ENCODE measurements at regions of chr1 and their contacts with region 1.

Region 1: GRCh38 chr1:220776720-220777326 is 9.9 kb upstream of the MTARC1 start:
- DNase-seq: peak; percentile 84
- H3K4me3 ChIP-seq: peak overlapping the region in 1 of 2 experiments; percentile 41; a peak in 1 of 4 replicates
- H3K27ac ChIP-seq: no peak overlapping the region
- H3K4me1 ChIP-seq: no peaks in the 10 kb centered on the region
- H3K27me3 ChIP-seq: no peaks in the 10 kb centered on the region
- CTCF ChIP-seq: peak; percentile 97
- EP300 ChIP-seq: no peak
- RAD21 ChIP-seq: peak; percentile 96

Region 2: DNA sequence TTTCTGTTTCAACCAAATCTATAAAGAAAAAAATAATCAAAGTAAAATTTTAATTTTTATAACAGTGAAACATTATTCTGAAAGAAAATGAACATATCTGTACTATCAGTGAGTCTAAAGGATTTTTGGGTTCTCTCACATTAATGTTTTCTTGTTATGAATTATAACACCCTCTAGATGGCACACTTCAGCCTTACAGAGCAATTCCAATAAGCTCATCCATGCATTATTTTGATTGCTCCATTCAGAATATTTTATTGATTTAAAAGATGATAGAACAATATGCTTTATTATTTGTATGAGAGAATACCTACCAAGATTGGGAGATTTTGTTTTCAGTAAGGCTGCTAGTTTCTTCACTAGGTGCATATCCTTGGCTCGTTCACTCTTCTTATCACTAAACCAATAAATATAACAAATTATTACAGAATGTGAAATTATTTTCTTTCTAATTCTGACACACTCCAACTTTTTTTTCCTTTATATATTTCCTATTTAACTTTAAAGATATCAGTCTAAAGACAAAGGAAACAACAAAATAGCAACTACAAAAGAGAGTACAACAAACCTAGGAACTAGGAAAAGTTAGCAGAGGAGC is 587.0 kb before region 1 on chr1:
- CTCF ChIA-PET with region 1: interaction called, 19 read pairs
- POLR2A ChIA-PET with region 1: no interaction called
- DNase-seq: peak; percentile 32
- H3K4me3 ChIP-seq: no peak overlapping the region
- H3K27ac ChIP-seq: 0 out of 4 replicates have a peak overlapping the region, but pooled peaks of 1 of the 2 experiments have one; percentile 19
- H3K4me1 ChIP-seq: peaks cover 0 to 2% of the 10 kb centered on the region in 2 experiments; a peak in 1 of 4 replicates
- H3K27me3 ChIP-seq: no peaks in the 10 kb centered on the region
- CTCF ChIP-seq: peak; percentile 72
- EP300 ChIP-seq: no peak
- RAD21 ChIP-seq: peak; percentile 68

Region 3: GRCh38 chr1:220281159-220281574 is 495.7 kb before region 1 on chr1:
- CTCF ChIA-PET with region 1: interaction called, 50 read pairs
- POLR2A ChIA-PET with region 1: no interaction called
- DNase-seq: peak; percentile 18
- H3K4me3 ChIP-seq: no peak overlapping the region
- H3K27ac ChIP-seq: no peak overlapping the region
- H3K4me1 ChIP-seq: peaks cover 0 to 6% of the 10 kb centered on the region in 2 experiments; a peak in 2 of 4 replicates
- H3K27me3 ChIP-seq: no peaks in the 10 kb centered on the region
- CTCF ChIP-seq: peak; percentile 83
- EP300 ChIP-seq: no peak
- RAD21 ChIP-seq: peak; percentile 80

Region 4: GRCh38 chr1:220680085-220680687 is 96.6 kb before region 1 on chr1:
- CTCF ChIA-PET with region 1: interaction called, 22 read pairs
- POLR2A ChIA-PET with region 1: no interaction called
- DNase-seq: peak; percentile 71
- H3K4me3 ChIP-seq: no peak overlapping the region
- H3K27ac ChIP-seq: no peak overlapping the region
- H3K4me1 ChIP-seq: no peaks in the 10 kb centered on the region
- H3K27me3 ChIP-seq: no peaks in the 10 kb centered on the region
- CTCF ChIP-seq: peak; percentile 78
- EP300 ChIP-seq: no peak
- RAD21 ChIP-seq: peak; percentile 73

Region 5: GRCh38 chr1:220726634-220727033 is 50.2 kb before region 1 on chr1:
- CTCF ChIA-PET with region 1: interaction called, 11 read pairs
- POLR2A ChIA-PET with region 1: no interaction called
- DNase-seq: no peak
- H3K4me3 ChIP-seq: no peak overlapping the region
- H3K27ac ChIP-seq: no peak overlapping the region
- H3K4me1 ChIP-seq: no peaks in the 10 kb centered on the region
- H3K27me3 ChIP-seq: no peaks in the 10 kb centered on the region
- CTCF ChIP-seq: peak; percentile 31; the same call in 1 of the 2 replicates
- EP300 ChIP-seq: no peak
- RAD21 ChIP-seq: no peak

Region 6: GRCh38 chr1:220755309-220755708 is 21.5 kb before region 1 on chr1:
- CTCF ChIA-PET with region 1: interaction called, 54 read pairs
- POLR2A ChIA-PET with region 1: no interaction called
- DNase-seq: no peak
- H3K4me3 ChIP-seq: no peak overlapping the region
- H3K27ac ChIP-seq: no peak overlapping the region
- H3K4me1 ChIP-seq: peaks cover 0 to 3% of the 10 kb centered on the region in 2 experiments; a peak in 1 of 4 replicates
- H3K27me3 ChIP-seq: no peaks in the 10 kb centered on the region
- CTCF ChIP-seq: no peak
- EP300 ChIP-seq: no peak
- RAD21 ChIP-seq: no peak

Region 7: GRCh38 chr1:220825819-220826551 is 49.2 kb after region 1 on chr1:
- CTCF ChIA-PET with region 1: no interaction called
- POLR2A ChIA-PET with region 1: no interaction called
- DNase-seq: no peak
- H3K4me3 ChIP-seq: no peak overlapping the region
- H3K27ac ChIP-seq: no peak overlapping the region
- H3K4me1 ChIP-seq: peaks cover 0 to 2% of the 10 kb centered on the region in 2 experiments; a peak in 1 of 4 replicates
- H3K27me3 ChIP-seq: no peaks in the 10 kb centered on the region; the same call in 1 of the 2 replicates
- CTCF ChIP-seq: no peak
- EP300 ChIP-seq: no peak
- RAD21 ChIP-seq: no peak

Region 8: GRCh38 chr1:221025956-221026355 is 249.1 kb after region 1 on chr1:
- CTCF ChIA-PET with region 1: no interaction called
- POLR2A ChIA-PET with region 1: no interaction called
- DNase-seq: no peak
- H3K4me3 ChIP-seq: no peak overlapping the region
- H3K27ac ChIP-seq: no peak overlapping the region
- H3K4me1 ChIP-seq: peaks cover 0 to 30% of the 10 kb centered on the region in 2 experiments; a peak in 2 of 4 replicates
- H3K27me3 ChIP-seq: no peaks in the 10 kb centered on the region
- CTCF ChIP-seq: no peak
- EP300 ChIP-seq: no peak
- RAD21 ChIP-seq: no peak

Region 9: GRCh38 chr1:221239792-221240191 is 463.0 kb after region 1 on chr1:
- CTCF ChIA-PET with region 1: no interaction called
- POLR2A ChIA-PET with region 1: no interaction called
- DNase-seq: no peak
- H3K4me3 ChIP-seq: no peak overlapping the region
- H3K27ac ChIP-seq: no peak overlapping the region
- H3K4me1 ChIP-seq: no peaks in the 10 kb centered on the region; a peak in 1 of 4 replicates
- H3K27me3 ChIP-seq: no peaks in the 10 kb centered on the region
- CTCF ChIP-seq: no peak
- EP300 ChIP-seq: no peak
- RAD21 ChIP-seq: no peak